ENCODE measurements at regions of chr7 and their contacts with region 1.

Region 1: GRCh38 chr7:17298207-17298839 is at the start of gene AHR:
- DNase-seq: peak; percentile 86
- ATAC-seq: peak; percentile 94
- H3K4me3 ChIP-seq: peak within 1 kb of the TSS; percentile 78 to 95 (median 82)
- H3K27ac ChIP-seq: peak within 1 kb of the TSS; percentile 83
- H3K4me1 ChIP-seq: peaks cover 24% of the 10 kb centered on the region
- H3K27me3 ChIP-seq: peaks cover 0 to 2% of the 10 kb centered on the region in 2 experiments; a peak in 1 of 5 replicates
- CTCF ChIP-seq: no peak
- EP300 ChIP-seq: 0 out of 4 replicates have a peak, but pooled peaks of 1 of the 2 experiments have one; percentile 6
- POLR2A ChIP-seq: peak; percentile 88 to 97
- RAD21 ChIP-seq: peak; percentile 53; the same call in 1 of the 2 replicates
- total RNA-seq, gene AHR: 31.3 and 34.1 TPM in 2 replicates

Region 2: GRCh38 chr7:16982640-16983350 is 315.5 kb before region 1 on chr7:
- CTCF ChIA-PET with region 1: interaction called, 13 read pairs
- POLR2A ChIA-PET with region 1: interaction called, 3 read pairs
- in situ Hi-C with region 1: loop called (anchors 5 kb)
- intact Hi-C with region 1: loop called (anchors 2 kb)
- DNase-seq: peak; percentile 58
- ATAC-seq: no peak
- H3K4me3 ChIP-seq: no peak overlapping the region
- H3K27ac ChIP-seq: no peak overlapping the region
- H3K4me1 ChIP-seq: peaks cover 54% of the 10 kb centered on the region
- H3K27me3 ChIP-seq: no peaks in the 10 kb centered on the region
- CTCF ChIP-seq: peak; percentile 78
- EP300 ChIP-seq: no peak
- POLR2A ChIP-seq: no peak
- RAD21 ChIP-seq: peak; percentile 75

Region 3: DNA sequence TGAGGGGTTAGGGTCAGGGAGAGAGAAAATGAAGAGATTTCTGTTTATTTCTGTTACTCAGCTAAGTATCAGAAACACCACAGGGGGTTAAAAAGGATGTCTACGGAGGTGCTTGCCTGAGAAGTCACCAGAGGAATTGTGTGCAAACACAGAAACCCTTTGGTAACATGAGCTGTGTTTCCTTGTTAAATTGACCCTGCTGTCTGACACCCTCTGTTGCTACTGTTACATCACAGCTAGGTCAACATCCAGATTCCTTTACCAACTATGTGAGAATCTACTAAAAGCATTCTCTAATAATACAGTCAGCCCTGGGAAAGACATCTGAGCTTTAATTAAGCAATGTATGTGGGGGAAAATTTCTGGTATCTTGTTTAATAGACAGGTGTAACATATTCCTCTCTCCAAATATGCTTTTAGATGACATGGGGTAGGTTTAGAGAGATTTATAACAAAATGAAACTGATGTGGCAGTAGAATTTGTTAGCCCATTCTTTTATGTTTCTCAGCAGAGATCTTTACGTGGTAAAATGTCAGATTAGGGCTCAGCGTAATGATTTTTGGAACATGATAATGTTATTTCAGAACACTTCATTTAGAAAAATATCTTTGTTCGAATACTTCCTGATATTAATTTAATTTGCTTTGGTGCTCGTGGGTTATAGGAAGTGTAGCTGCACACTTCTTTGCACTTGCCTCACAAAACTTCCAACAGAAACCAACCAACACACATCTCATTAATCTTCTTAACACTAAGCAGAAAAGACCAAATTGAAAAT is 167.9 kb before region 1 on chr7:
- CTCF ChIA-PET with region 1: no interaction called
- POLR2A ChIA-PET with region 1: interaction called, 19 read pairs
- in situ Hi-C with region 1: no loop called
- intact Hi-C with region 1: loop called (anchors 2 kb)
- DNase-seq: peak; percentile 98
- ATAC-seq: peak; percentile 96
- H3K4me3 ChIP-seq: peak overlapping the region in 2 of 3 experiments; percentile 20 to 23; a peak in 2 of 6 replicates
- H3K27ac ChIP-seq: peak overlapping the region; percentile 86
- H3K4me1 ChIP-seq: peaks cover 91% of the 10 kb centered on the region
- H3K27me3 ChIP-seq: no peaks in the 10 kb centered on the region
- CTCF ChIP-seq: no peak
- EP300 ChIP-seq: peak; percentile 80 to 98
- POLR2A ChIP-seq: no peak
- RAD21 ChIP-seq: no peak

Region 4: GRCh38 chr7:17234398-17235031 is 63.8 kb before region 1 on chr7:
- CTCF ChIA-PET with region 1: no interaction called
- POLR2A ChIA-PET with region 1: interaction called, 5 read pairs
- in situ Hi-C with region 1: no loop called
- intact Hi-C with region 1: loop called (anchors 5 kb)
- DNase-seq: peak; percentile 32
- ATAC-seq: no peak
- H3K4me3 ChIP-seq: no peak overlapping the region
- H3K27ac ChIP-seq: no peak overlapping the region
- H3K4me1 ChIP-seq: peaks cover 14% of the 10 kb centered on the region
- H3K27me3 ChIP-seq: peaks cover 0 to 11% of the 10 kb centered on the region in 2 experiments; a peak in 3 of 5 replicates
- CTCF ChIP-seq: no peak
- EP300 ChIP-seq: no peak
- POLR2A ChIP-seq: no peak
- RAD21 ChIP-seq: no peak

Region 5: GRCh38 chr7:17318146-17318545 is 19.8 kb after region 1 on chr7:
- CTCF ChIA-PET with region 1: no interaction called
- POLR2A ChIA-PET with region 1: no interaction called
- in situ Hi-C with region 1: no loop called
- intact Hi-C with region 1: no loop called
- DNase-seq: no peak
- ATAC-seq: no peak
- H3K4me3 ChIP-seq: no peak overlapping the region
- H3K27ac ChIP-seq: no peak overlapping the region
- H3K4me1 ChIP-seq: peaks cover 47% of the 10 kb centered on the region
- H3K27me3 ChIP-seq: no peaks in the 10 kb centered on the region
- CTCF ChIP-seq: no peak
- EP300 ChIP-seq: no peak
- POLR2A ChIP-seq: no peak
- RAD21 ChIP-seq: no peak

Region 6: GRCh38 chr7:17530741-17531417 is 232.6 kb after region 1 on chr7:
- CTCF ChIA-PET with region 1: no interaction called
- POLR2A ChIA-PET with region 1: no interaction called
- in situ Hi-C with region 1: no loop called
- intact Hi-C with region 1: loop called (anchors 10 kb)
- DNase-seq: peak; percentile 21
- ATAC-seq: peak; percentile 80
- H3K4me3 ChIP-seq: no peak overlapping the region
- H3K27ac ChIP-seq: no peak overlapping the region
- H3K4me1 ChIP-seq: peaks cover 8% of the 10 kb centered on the region; the same call in 1 of the 2 replicates
- H3K27me3 ChIP-seq: no peaks in the 10 kb centered on the region; a peak in 1 of 5 replicates
- CTCF ChIP-seq: peak; percentile 68
- EP300 ChIP-seq: no peak
- POLR2A ChIP-seq: no peak
- RAD21 ChIP-seq: peak; percentile 57; the same call in 1 of the 2 replicates